Left cardiac atrium (tissue), 4 donors: ENCODE measurements at regions of chr14 and their contacts with region 1.

Region 1: DNA sequence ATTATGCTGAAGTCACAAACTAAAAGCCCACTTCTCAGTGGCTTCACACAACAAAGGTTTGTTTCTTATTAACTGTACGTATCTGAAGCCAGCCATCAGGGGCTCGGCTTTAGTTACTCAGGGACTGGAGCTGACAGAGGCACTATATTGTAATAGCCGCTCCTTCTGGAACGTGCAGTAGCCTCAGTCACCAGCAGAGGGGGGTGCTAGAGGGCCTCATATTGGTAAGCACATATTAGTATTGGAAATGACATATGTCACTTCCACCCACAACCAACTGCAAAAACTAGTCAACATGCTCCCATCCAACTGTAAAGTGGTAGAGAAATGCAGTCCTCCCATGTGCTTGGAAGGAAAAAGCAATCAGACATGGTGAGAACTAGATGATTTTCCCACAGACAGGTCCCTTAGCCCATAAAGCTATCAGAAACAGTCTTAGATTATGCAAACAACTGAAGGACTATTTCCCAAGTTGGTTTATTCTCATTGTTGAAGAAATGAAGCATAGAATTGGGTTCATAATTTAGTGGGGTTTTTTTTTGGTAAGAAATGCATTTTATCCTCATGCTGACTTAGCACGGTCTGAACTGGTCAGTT is 183.6 kb upstream of the G2E3 start:
- DNase-seq: peak; percentile 48
- ATAC-seq: peak; percentile 47 to 62

Region 2: GRCh38 chr14:30521899-30522736 is 146.7 kb after region 1 on chr14:
- intact Hi-C with region 1: loop called in 1 of 2 experiments (anchors 10 kb)
- DNase-seq: no peak
- ATAC-seq: no peak

Region 3: GRCh38 chr14:30656190-30656632 is 280.8 kb after region 1 on chr14:
- intact Hi-C with region 1: no loop called
- DNase-seq: peak; percentile 24
- ATAC-seq: peak in 1 of 2 donors; percentile 47